Ascending aorta (tissue), 2 donors: ENCODE measurements at regions of chr2 and their contacts with region 1.

Region 1: GRCh38 chr2:17719562-17720371 is 33.8 kb downstream of the SMC6 start:
- DNase-seq: no peak
- H3K4me3 ChIP-seq: no peak overlapping the region
- H3K27ac ChIP-seq: no peak overlapping the region
- H3K4me1 ChIP-seq: no peaks in the 10 kb centered on the region
- H3K27me3 ChIP-seq: no peaks in the 10 kb centered on the region
- CTCF ChIP-seq: peak; percentile 27 to 78 (median 72)

Region 2: DNA sequence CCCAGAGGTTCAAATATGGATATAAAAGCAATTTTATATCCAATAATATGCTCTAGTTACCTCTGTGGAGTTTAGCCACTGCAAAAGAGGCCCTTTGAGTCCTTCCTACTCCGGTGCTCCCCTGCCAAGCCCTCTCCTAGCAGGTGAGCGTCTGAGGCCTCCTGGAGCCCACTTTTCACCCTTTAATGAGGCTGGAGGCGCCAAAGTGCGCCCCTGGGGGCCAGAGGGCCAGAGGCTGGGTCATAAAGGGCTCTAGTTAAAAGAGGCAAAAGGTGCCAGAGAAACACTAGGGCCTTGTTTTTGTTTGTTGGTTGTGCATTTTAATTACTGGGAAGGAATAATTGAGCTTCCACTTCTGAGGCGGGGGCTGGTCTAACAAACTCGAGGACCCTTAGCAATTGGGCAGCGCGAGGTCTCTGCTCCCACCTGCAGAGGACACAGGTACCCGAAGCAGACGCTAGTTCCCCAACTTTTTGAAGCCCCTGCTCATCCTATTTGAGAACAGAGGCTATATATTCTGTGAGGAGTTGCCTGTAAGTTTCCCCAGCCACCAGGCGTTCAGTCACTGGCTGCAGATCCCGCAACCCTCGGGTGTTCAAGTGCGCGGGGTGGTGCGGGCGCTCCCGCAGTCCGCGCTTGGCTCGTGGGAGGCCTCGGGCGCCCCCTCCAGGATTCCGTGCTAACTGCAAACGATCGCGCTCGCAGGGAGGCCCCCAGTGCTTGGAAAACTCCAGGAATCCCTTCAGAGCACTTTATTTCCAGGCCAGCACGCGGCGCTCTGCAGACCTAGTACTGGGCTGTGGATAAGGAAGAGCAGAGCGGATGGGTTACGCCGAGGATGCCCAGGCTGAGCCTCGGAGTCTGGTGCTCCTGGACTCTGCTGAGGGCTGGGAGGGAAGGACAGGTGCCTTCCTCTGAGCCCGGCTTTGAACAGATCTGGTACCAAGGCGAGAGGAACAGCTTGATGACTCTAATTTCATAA is 110.6 kb after region 1 on chr2:
- intact Hi-C with region 1: loop called (anchors 5 kb)
- DNase-seq: peak in 1 of 2 donors; percentile 79
- H3K4me3 ChIP-seq: peak overlapping the region in 1 of 2 donors; percentile 47
- H3K27ac ChIP-seq: no peak overlapping the region
- H3K4me1 ChIP-seq: peaks cover 0 to 3% of the 10 kb centered on the region in 2 donors
- H3K27me3 ChIP-seq: no peaks in the 10 kb centered on the region
- CTCF ChIP-seq: peak; percentile 74 to 96 (median 80)

Region 3: GRCh38 chr2:18378020-18378653 is 658.4 kb after region 1 on chr2:
- intact Hi-C with region 1: loop called (anchors 5 kb)
- DNase-seq: no peak
- H3K4me3 ChIP-seq: no peak overlapping the region
- H3K27ac ChIP-seq: no peak overlapping the region
- H3K4me1 ChIP-seq: no peaks in the 10 kb centered on the region
- H3K27me3 ChIP-seq: no peaks in the 10 kb centered on the region
- CTCF ChIP-seq: peak; percentile 58 to 84 (median 79)